CD8-positive, alpha-beta T cell (primary cell): ENCODE measurements at regions of chr1 and their contacts with region 1.

Region 1: DNA sequence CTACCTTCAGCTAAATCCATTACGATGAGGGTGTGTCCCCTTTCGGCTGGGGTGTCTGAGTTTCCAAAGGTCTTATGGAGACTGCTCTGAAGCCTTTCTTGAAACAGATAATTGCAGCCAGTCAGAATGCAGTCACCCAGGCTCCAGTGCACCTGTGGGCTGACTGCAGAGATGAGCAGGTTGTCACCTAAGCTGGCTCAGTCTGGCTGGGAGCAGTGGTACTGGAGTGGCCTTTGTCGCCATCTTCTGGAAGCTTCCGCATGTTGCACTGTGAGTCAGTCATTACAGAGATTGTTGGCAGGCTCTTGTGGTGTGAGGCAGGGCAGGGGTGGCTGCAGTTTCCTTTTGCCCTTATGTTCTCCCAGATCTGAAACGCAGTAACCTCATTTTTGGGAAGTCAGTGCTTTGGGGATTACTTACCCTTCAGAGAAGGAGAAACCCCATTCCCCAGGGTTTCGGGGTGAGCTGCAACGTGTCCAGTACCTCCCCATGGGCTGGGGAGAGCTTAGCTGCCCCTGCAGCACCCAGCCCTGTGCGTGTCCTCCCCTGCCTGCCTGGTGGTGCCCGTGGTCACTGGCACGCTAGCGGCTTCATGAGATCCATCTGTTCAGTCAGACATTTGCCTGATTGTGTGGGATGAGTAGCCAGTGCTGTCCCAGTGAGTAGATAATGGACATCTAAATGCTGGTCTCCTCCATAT is 48.0 kb downstream of the SMYD2 start:
- DNase-seq: peak; percentile 62 to 87 (median 75)
- ATAC-seq: peak; percentile 98
- H3K4me3 ChIP-seq: no peak overlapping the region
- H3K4me3 Mint-ChIP-seq: no peak overlapping the region
- H3K27ac ChIP-seq: no peak overlapping the region
- H3K27ac Mint-ChIP-seq: no peak overlapping the region
- H3K4me1 ChIP-seq: no peaks in the 10 kb centered on the region
- H3K4me1 Mint-ChIP-seq: no peaks in the 10 kb centered on the region
- H3K27me3 ChIP-seq: no peaks in the 10 kb centered on the region
- H3K27me3 Mint-ChIP-seq: no peaks in the 10 kb centered on the region
- CTCF ChIP-seq: peak; percentile 79

Region 2: GRCh38 chr1:213244664-213245091 is 1084.2 kb before region 1 on chr1:
- CTCF ChIA-PET with region 1: interaction called, 4 read pairs
- POLR2A ChIA-PET with region 1: no interaction called
- intact Hi-C with region 1: loop called (anchors 2 to 10 kb)
- DNase-seq: peak in 3 of 9 experiments; percentile 9 to 55 (median 45)
- ATAC-seq: no peak
- H3K4me3 ChIP-seq: no peak overlapping the region
- H3K4me3 Mint-ChIP-seq: no peak overlapping the region
- H3K27ac ChIP-seq: no peak overlapping the region
- H3K27ac Mint-ChIP-seq: no peak overlapping the region
- H3K4me1 ChIP-seq: no peaks in the 10 kb centered on the region
- H3K4me1 Mint-ChIP-seq: no peaks in the 10 kb centered on the region
- H3K27me3 ChIP-seq: no peaks in the 10 kb centered on the region
- H3K27me3 Mint-ChIP-seq: no peaks in the 10 kb centered on the region
- CTCF ChIP-seq: peak; percentile 96

Region 3: DNA sequence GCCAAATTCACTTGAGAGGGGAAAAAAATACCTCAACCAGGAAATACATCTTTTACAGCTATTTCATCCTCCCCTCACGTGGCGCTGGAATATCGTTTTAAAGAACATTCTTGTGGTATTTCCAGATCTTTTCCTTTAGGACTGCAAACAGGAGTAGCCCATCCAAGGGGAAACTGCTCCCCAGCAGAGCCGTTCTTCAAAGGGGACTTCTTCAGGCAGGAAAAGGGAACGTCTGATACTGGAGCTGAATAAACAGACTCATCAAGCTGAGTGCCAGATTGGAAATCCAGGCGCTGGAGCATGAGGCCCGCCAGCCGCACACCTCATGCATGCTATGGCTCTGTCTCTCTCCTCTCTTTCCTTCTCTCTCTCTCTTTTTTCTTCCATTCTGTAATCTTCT is 375.1 kb before region 1 on chr1:
- CTCF ChIA-PET with region 1: no interaction called
- POLR2A ChIA-PET with region 1: no interaction called
- intact Hi-C with region 1: no loop called
- DNase-seq: no peak
- ATAC-seq: no peak
- H3K4me3 ChIP-seq: no peak overlapping the region
- H3K4me3 Mint-ChIP-seq: no peak overlapping the region
- H3K27ac ChIP-seq: no peak overlapping the region
- H3K27ac Mint-ChIP-seq: no peak overlapping the region
- H3K4me1 ChIP-seq: no peaks in the 10 kb centered on the region
- H3K4me1 Mint-ChIP-seq: no peaks in the 10 kb centered on the region
- H3K27me3 ChIP-seq: no peaks in the 10 kb centered on the region
- H3K27me3 Mint-ChIP-seq: peaks cover 7% of the 10 kb centered on the region
- CTCF ChIP-seq: no peak

Region 4: DNA sequence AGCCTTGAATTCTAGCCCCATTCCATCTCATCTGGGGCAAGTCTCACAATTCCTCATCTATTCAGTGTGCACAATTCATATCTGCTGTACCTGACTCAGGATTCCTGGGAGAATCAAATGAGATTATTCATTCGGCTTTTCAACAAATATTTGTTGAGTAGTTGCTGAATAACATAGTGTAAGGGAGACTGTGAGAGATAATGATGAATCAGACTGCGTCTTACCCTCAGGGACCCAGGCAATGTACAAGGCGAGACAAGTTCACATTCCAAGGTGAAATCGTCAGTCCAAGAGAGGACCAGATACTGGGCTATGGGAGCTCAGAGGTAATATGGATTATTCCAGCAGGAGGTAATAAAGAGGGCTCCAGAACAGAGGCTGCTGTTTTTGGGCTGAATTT is 115.8 kb before region 1 on chr1:
- CTCF ChIA-PET with region 1: interaction called, 87 read pairs
- POLR2A ChIA-PET with region 1: no interaction called
- intact Hi-C with region 1: loop called (anchors 1 to 2 kb)
- DNase-seq: no peak
- ATAC-seq: no peak
- H3K4me3 ChIP-seq: no peak overlapping the region
- H3K4me3 Mint-ChIP-seq: no peak overlapping the region
- H3K27ac ChIP-seq: no peak overlapping the region
- H3K27ac Mint-ChIP-seq: no peak overlapping the region
- H3K4me1 ChIP-seq: no peaks in the 10 kb centered on the region
- H3K4me1 Mint-ChIP-seq: peaks cover 3% of the 10 kb centered on the region
- H3K27me3 ChIP-seq: no peaks in the 10 kb centered on the region
- H3K27me3 Mint-ChIP-seq: peaks cover 18% of the 10 kb centered on the region
- CTCF ChIP-seq: no peak

Region 5: GRCh38 chr1:214281021-214281719 is 47.8 kb before region 1 on chr1 and contains the start of gene SMYD2:
- CTCF ChIA-PET with region 1: interaction called, 17 read pairs
- POLR2A ChIA-PET with region 1: interaction called, 4 read pairs
- intact Hi-C with region 1: loop called in 1 of 2 experiments (anchors 1 kb)
- DNase-seq: peak; percentile 32 to 85 (median 68)
- ATAC-seq: peak; percentile 77
- H3K4me3 ChIP-seq: peak within 1 kb of the TSS; percentile 60 to 80
- H3K4me3 Mint-ChIP-seq: peak within 1 kb of the TSS; percentile 86
- H3K27ac ChIP-seq: peak within 1 kb of the TSS; percentile 72 to 83
- H3K27ac Mint-ChIP-seq: peak within 1 kb of the TSS; percentile 91
- H3K4me1 ChIP-seq: peaks cover 26% of the 10 kb centered on the region
- H3K4me1 Mint-ChIP-seq: peaks cover 57% of the 10 kb centered on the region
- H3K27me3 ChIP-seq: no peaks in the 10 kb centered on the region
- H3K27me3 Mint-ChIP-seq: no peaks in the 10 kb centered on the region
- CTCF ChIP-seq: no peak
- total RNA-seq, gene SMYD2: 12.9 to 14.1 TPM

Region 6: GRCh38 chr1:214349781-214350180 is 20.9 kb after region 1 on chr1:
- CTCF ChIA-PET with region 1: interaction called, 25 read pairs
- POLR2A ChIA-PET with region 1: no interaction called
- intact Hi-C with region 1: no loop called
- DNase-seq: no peak
- ATAC-seq: no peak
- H3K4me3 ChIP-seq: no peak overlapping the region
- H3K4me3 Mint-ChIP-seq: no peak overlapping the region
- H3K27ac ChIP-seq: no peak overlapping the region
- H3K27ac Mint-ChIP-seq: no peak overlapping the region
- H3K4me1 ChIP-seq: no peaks in the 10 kb centered on the region
- H3K4me1 Mint-ChIP-seq: no peaks in the 10 kb centered on the region
- H3K27me3 ChIP-seq: no peaks in the 10 kb centered on the region
- H3K27me3 Mint-ChIP-seq: no peaks in the 10 kb centered on the region
- CTCF ChIP-seq: no peak

Region 7: DNA sequence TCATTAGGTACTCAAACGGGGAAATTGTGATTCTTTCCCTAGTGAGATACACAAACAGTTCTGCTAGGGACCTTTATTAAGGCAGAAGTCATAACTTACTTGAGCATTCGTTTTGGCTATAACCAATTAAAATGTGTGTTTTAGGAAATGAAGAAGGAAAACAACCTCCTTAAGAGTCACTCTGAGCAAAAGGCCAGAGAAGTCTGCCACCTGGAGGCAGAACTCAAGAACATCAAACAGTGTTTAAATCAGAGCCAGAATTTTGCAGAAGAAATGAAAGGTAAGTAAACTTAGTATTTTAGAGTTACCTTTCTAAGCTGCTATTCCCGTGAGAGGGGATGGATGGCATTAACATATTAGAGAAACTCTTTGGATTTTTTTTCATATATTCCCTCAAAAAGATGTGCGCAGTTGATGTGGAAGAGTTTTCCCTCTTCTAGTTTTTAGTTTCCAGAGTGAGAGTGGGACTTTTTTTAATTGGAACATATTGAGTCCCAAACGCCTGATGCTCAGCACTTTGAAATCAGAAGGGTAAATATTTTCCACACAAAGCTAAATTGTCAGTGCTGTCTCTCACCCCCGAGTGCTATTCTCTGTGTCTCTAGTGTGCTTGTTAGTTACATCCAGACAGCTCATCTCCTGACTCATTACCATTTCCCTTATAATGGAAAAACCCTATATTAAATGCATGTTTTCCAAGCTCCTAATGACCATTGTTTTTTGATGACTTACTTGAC is 309.0 kb after region 1 on chr1:
- CTCF ChIA-PET with region 1: interaction called, 15 read pairs
- POLR2A ChIA-PET with region 1: no interaction called
- intact Hi-C with region 1: no loop called
- DNase-seq: peak in 5 of 9 experiments; percentile 14 to 64 (median 28)
- ATAC-seq: peak; percentile 42
- H3K4me3 ChIP-seq: no peak overlapping the region
- H3K4me3 Mint-ChIP-seq: peak overlapping the region; percentile 35
- H3K27ac ChIP-seq: no peak overlapping the region
- H3K27ac Mint-ChIP-seq: peak overlapping the region; percentile 80
- H3K4me1 ChIP-seq: peaks cover 52% of the 10 kb centered on the region
- H3K4me1 Mint-ChIP-seq: peaks cover 24% of the 10 kb centered on the region
- H3K27me3 ChIP-seq: no peaks in the 10 kb centered on the region
- H3K27me3 Mint-ChIP-seq: no peaks in the 10 kb centered on the region
- CTCF ChIP-seq: peak; percentile 67